ENCODE measurements at regions of chr17 and their contacts with region 1.

Region 1: GRCh38 chr17:39951924-39952679 is 10.7 kb upstream of the GSDMA start:
- DNase-seq: peak; percentile 71
- H3K4me3 ChIP-seq: peak overlapping the region in 3 of 4 donors; percentile 41 to 48 (median 42)
- H3K27ac ChIP-seq: peak overlapping the region; percentile 62 to 71 (median 68)
- H3K4me1 ChIP-seq: peaks cover 0 to 13% (median 12%) of the 10 kb centered on the region in 4 donors
- H3K27me3 ChIP-seq: no peaks in the 10 kb centered on the region
- CTCF ChIP-seq: no peak
- EP300 ChIP-seq: no peak
- POLR2A ChIP-seq: no peak

Region 2: DNA sequence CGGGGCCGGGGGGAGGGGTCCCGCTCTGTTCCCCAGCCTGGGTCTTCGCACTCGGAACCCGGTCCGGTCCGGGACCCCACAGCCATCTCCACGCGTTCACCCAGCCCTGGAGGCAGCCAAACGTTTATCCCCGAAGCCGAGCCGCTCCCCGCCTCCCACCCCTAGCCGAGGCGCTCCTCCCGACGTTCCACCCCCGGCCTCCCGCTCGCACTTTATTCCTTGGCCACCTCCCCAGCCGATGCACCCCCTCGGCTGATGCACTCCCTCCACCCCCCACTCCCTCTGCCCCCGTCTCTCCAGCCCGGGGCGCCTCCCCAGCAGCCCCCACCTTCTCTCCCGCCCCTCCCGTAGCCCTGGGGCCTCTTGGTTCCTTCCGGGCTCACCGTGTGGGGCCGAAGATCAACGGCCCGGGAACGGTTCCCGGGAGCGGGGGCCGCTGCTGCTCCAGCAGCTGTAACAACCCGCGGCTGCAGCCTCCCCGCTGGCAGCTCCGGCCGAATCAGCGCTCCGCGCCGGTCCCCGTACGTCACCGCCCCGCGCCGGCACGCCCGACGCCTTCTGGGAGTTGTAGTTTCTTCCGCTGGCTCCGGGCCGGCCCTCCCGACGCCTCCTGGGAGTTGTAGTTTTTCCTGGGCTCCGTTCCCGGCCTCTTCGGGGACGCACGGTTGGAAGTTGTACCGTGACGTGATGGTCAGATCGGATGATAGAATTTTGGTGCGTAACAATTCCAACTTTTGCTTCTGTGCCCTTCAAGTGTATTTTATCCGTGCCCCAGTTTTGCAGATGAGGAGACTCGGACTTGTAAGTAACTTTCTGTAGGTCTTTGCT is 24.8 kb before region 1 on chr17 and contains the starts of genes LRRC3C and ORMDL3:
- intact Hi-C with region 1: loop called (anchors 2 kb)
- DNase-seq: peak; percentile 98
- H3K4me3 ChIP-seq: peak within 1 kb of the TSS; percentile 54 to 93 (median 91)
- H3K27ac ChIP-seq: peak within 1 kb of the TSS; percentile 89 to 92 (median 90)
- H3K4me1 ChIP-seq: peaks cover 0 to 46% (median 33%) of the 10 kb centered on the region in 4 donors
- H3K27me3 ChIP-seq: no peaks in the 10 kb centered on the region
- CTCF ChIP-seq: no peak
- EP300 ChIP-seq: peak in 1 of 4 donors; percentile 72
- POLR2A ChIP-seq: peak in 1 of 2 donors; percentile 64
- total RNA-seq, gene LRRC3C: not detected
- total RNA-seq, gene ORMDL3: 39.8 to 55.7 (median 51.8) TPM

Measured in sigmoid colon (tissue), 7 donors.